ENCODE measurements at regions of chr6 and their contacts with region 1.

Region 1: GRCh38 chr6:2765896-2766745 is 928 bp downstream of the WRNIP1 start:
- DNase-seq: peak; percentile 50
- H3K4me3 Mint-ChIP-seq: peak overlapping the region; percentile 74
- H3K27ac Mint-ChIP-seq: peak overlapping the region; percentile 32
- H3K4me1 Mint-ChIP-seq: peaks cover 9% of the 10 kb centered on the region
- H3K27me3 Mint-ChIP-seq: no peaks in the 10 kb centered on the region
- CTCF ChIP-seq: no peak

Region 2: DNA sequence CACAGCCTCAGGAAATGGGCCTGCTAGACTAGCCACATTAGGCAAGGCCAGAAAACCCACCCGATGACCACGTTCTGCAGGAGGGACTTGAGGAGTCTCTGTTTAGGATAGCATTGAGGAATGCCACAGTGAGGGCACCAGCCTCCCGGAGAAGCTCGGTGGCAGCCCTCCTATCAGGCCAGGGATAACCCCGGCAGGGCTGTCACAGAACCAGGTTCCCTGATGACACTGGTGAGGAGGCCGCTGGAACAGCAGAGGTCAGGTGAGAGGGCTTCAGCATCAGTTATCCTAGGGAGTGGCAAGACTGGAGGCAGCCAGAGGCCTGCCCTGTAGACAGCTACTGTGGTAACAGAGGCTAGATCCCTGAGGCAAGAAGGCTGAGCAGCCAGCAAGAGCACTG is 173.0 kb before region 1 on chr6:
- CTCF ChIA-PET with region 1: interaction called, 12 read pairs
- intact Hi-C with region 1: no loop called
- DNase-seq: no peak
- H3K4me3 Mint-ChIP-seq: no peak overlapping the region
- H3K27ac Mint-ChIP-seq: no peak overlapping the region
- H3K4me1 Mint-ChIP-seq: peaks cover 14% of the 10 kb centered on the region
- H3K27me3 Mint-ChIP-seq: no peaks in the 10 kb centered on the region
- CTCF ChIP-seq: no peak

Region 3: GRCh38 chr6:3500262-3501016 is 734.3 kb after region 1 on chr6:
- CTCF ChIA-PET with region 1: no interaction called
- intact Hi-C with region 1: no loop called
- DNase-seq: no peak
- H3K4me3 Mint-ChIP-seq: no peak overlapping the region
- H3K27ac Mint-ChIP-seq: no peak overlapping the region
- H3K4me1 Mint-ChIP-seq: no peaks in the 10 kb centered on the region
- H3K27me3 Mint-ChIP-seq: peaks cover 30% of the 10 kb centered on the region
- CTCF ChIP-seq: no peak

Measured in Calu3 (cell line).